Natural killer cell (primary cell): ENCODE measurements at regions of chr10 and their contacts with region 1.

Region 1: DNA sequence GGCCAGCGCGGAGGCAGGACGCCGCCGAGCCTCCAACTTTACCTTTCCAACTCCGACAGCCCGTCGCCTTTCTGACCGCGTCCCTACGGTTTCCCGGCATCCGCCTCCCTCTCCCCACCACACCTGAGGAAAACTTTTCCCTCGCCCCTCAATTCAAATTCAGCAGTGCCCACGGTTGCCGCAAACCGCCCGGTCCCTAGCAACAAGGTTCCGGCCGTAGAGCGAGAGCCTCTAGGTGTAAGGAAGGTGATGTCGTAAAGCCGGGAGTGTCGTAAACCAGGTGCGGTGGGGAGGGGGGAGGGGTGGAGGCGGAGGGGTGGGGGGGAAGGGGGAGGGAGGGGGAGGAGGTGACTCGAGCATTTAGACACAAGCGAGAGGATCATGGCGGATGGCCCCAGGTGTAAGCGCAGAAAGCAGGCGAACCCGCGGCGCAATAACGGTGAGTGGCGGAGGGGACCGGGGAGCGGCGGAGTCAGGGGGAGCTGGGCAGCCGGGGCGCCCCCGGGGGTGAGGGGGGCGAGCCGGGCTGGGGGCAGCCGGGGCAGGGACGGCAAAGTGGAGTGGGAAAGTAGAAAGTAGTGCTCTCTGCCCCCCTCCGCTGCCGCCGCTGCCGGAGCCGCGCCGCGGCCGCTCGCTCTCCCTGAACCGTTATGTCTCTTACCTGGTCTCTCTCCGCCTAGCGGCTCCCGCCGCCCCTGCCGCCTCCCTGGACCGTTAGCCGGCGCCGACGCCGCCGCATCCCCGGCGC is at the start of gene ZEB1:
- DNase-seq: peak; percentile 77 to 97
- ATAC-seq: peak; percentile 62 to 86 (median 74)
- H3K4me3 ChIP-seq: peak within 1 kb of the TSS; percentile 93
- H3K4me3 Mint-ChIP-seq: peak within 1 kb of the TSS; percentile 95
- H3K27ac ChIP-seq: peak within 1 kb of the TSS; percentile 96
- H3K27ac Mint-ChIP-seq: peak within 1 kb of the TSS; percentile 64 to 94
- H3K4me1 ChIP-seq: peaks cover 17% of the 10 kb centered on the region
- H3K4me1 Mint-ChIP-seq: peaks cover 27 to 44% of the 10 kb centered on the region in 2 donors
- H3K27me3 ChIP-seq: no peaks in the 10 kb centered on the region
- H3K27me3 Mint-ChIP-seq: peaks cover 0 to 8% of the 10 kb centered on the region in 2 donors
- CTCF ChIP-seq: peak; percentile 14
- total RNA-seq, gene ZEB1: 29.3 to 30.6 (median 29.7) TPM

Region 2: DNA sequence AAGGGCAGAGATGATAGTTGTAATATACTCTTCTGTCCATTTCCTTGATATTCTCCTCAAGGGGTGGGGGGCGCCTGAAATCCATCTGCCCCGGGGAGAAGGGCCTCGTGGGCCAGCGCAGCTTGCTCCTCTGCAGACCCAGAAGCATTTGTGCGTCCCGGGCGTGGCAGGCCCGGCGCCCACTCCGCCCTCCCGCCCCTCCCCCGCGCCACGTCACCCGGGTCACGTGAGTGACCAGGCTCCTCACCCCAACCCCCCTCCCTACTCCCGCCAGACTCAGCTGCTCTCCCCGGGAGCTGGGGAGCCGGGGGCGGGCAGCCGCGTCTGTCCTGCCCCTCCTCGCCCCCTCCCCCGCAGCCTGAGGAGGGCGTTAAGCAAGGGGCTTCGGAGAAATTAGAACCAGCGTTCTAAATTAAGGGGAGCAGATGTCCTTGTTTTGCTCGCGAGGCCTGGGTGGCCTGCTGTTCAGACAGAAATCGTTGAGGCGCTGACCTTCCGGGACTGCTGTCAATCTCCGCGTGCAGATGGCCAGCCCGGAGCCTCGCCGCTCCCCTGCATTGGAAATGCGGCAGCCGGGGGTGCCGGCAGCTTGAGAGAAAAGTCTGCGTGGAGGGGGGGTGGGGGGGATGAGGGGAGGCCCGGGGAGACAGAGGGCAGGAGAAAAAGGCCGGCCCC is 185.3 kb before region 1 on chr10:
- intact Hi-C with region 1: loop called (anchors 10 kb)
- DNase-seq: peak; percentile 41 to 82
- ATAC-seq: peak; percentile 81 to 84 (median 82)
- H3K4me3 ChIP-seq: peak overlapping the region; percentile 72
- H3K4me3 Mint-ChIP-seq: peak overlapping the region; percentile 80
- H3K27ac ChIP-seq: peak overlapping the region; percentile 74
- H3K27ac Mint-ChIP-seq: peak overlapping the region in 1 of 2 donors; percentile 75
- H3K4me1 ChIP-seq: peaks cover 20% of the 10 kb centered on the region
- H3K4me1 Mint-ChIP-seq: peaks cover 19 to 26% of the 10 kb centered on the region in 2 donors
- H3K27me3 ChIP-seq: no peaks in the 10 kb centered on the region
- H3K27me3 Mint-ChIP-seq: no peaks in the 10 kb centered on the region
- CTCF ChIP-seq: no peak

Region 3: DNA sequence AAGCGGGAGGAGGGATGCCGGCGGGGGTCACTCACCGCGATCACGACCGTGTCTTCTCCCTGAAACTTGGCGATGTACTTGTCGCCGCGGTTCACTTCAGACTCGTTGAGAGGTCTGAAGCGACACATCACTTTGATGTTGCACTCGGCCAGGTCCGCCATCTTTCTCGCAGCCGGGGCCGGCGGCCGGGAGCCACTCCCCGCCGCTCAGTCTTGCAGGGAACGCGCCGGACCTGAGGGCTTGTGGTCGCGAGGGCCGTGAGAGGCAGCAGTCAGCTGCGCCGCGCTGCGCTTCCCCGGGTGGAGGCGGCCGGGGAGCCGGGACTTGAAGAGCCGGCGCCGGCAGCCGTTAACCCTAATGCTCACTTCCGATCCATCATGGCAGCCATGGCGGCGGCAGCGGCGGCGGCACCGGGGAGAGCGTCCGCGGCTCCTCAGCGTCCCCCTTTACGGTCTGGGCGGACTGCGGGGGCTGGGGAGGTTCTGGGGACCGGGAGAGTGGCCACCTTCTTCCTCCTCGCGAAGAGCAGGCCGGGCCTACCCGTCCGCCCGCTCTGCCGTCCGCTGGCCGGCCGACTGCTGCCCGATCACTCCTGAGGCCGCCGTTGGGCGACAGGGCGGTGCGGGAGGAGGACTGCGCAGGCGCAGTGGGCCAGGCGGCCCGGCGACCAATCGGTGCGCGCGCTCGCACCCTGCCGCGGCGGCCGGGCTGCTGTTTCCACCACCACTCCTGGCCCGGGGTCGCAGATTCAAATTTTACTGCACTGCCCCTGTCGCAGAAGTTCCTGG is 737.0 kb after region 1 on chr10 and contains the start of gene KIF5B:
- intact Hi-C with region 1: loop called (anchors 10 kb)
- DNase-seq: peak; percentile 88 to 95
- ATAC-seq: peak; percentile 78 to 88 (median 82)
- H3K4me3 ChIP-seq: peak within 1 kb of the TSS; percentile 98
- H3K4me3 Mint-ChIP-seq: peak within 1 kb of the TSS; percentile 98
- H3K27ac ChIP-seq: peak within 1 kb of the TSS; percentile 89
- H3K27ac Mint-ChIP-seq: peak within 1 kb of the TSS; percentile 93 to 98
- H3K4me1 ChIP-seq: peaks cover 14% of the 10 kb centered on the region
- H3K4me1 Mint-ChIP-seq: peaks cover 56 to 59% of the 10 kb centered on the region in 2 donors
- H3K27me3 ChIP-seq: no peaks in the 10 kb centered on the region
- H3K27me3 Mint-ChIP-seq: no peaks in the 10 kb centered on the region
- CTCF ChIP-seq: no peak
- total RNA-seq, gene KIF5B: 51.0 to 64.2 (median 61.1) TPM

Region 4: DNA sequence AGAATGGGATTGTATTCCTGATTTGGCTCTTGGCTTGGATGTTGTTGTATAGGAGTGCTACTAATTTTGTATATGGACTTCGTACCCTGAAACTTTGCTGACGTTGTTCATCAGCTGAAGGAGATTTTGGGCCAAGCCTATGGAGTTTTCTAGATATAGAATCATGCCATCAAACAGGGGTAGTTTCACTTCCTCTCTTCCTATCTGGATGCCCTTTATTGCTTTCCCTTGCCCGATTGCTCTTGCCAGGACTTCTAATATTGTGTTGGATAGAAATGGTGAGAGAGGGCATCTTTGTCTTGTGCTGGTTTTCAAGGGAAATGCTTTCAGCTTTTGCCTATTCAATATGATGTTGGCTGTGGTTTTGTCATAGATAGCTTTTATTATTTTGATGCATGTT is 1219.2 kb after region 1 on chr10:
- intact Hi-C with region 1: no loop called
- DNase-seq: no peak
- ATAC-seq: no peak
- H3K4me3 ChIP-seq: no peak overlapping the region
- H3K4me3 Mint-ChIP-seq: no peak overlapping the region
- H3K27ac ChIP-seq: no peak overlapping the region
- H3K27ac Mint-ChIP-seq: no peak overlapping the region
- H3K4me1 ChIP-seq: no peaks in the 10 kb centered on the region
- H3K4me1 Mint-ChIP-seq: no peaks in the 10 kb centered on the region
- H3K27me3 ChIP-seq: no peaks in the 10 kb centered on the region
- H3K27me3 Mint-ChIP-seq: no peaks in the 10 kb centered on the region
- CTCF ChIP-seq: no peak